ENCODE measurements at regions of chr10 and their contacts with region 1.

Region 1: GRCh38 chr10:99560277-99561126 is 27.8 kb downstream of the NKX2-3 start:
- DNase-seq: peak in 1 of 2 experiments; percentile 83
- H3K4me3 ChIP-seq: no peak overlapping the region
- H3K27ac ChIP-seq: no peak overlapping the region
- H3K4me1 ChIP-seq: peaks cover 0 to 2% (median 0%) of the 10 kb centered on the region in 4 experiments; a peak in 2 of 7 replicates
- H3K27me3 ChIP-seq: peaks cover 0 to under 1% (median 0%) of the 10 kb centered on the region in 4 experiments; a peak in 2 of 7 replicates
- CTCF ChIP-seq: peak in 2 of 3 experiments; percentile 78 to 80; a peak in 3 of 4 replicates
- EP300 ChIP-seq: no peak
- POLR2A ChIP-seq: no peak
- RAD21 ChIP-seq: peak; percentile 88 to 91

Region 2: GRCh38 chr10:99403674-99404073 is 156.8 kb before region 1 on chr10:
- CTCF ChIA-PET with region 1: no interaction called
- POLR2A ChIA-PET with region 1: no interaction called
- DNase-seq: no peak
- H3K4me3 ChIP-seq: no peak overlapping the region
- H3K27ac ChIP-seq: no peak overlapping the region
- H3K4me1 ChIP-seq: no peaks in the 10 kb centered on the region
- H3K27me3 ChIP-seq: no peaks in the 10 kb centered on the region
- CTCF ChIP-seq: no peak
- EP300 ChIP-seq: no peak
- POLR2A ChIP-seq: no peak
- RAD21 ChIP-seq: no peak

Region 3: GRCh38 chr10:99548041-99548530 is 12.4 kb before region 1 on chr10:
- CTCF ChIA-PET with region 1: interaction called, 24 read pairs
- POLR2A ChIA-PET with region 1: no interaction called
- DNase-seq: no peak
- H3K4me3 ChIP-seq: no peak overlapping the region
- H3K27ac ChIP-seq: no peak overlapping the region
- H3K4me1 ChIP-seq: no peaks in the 10 kb centered on the region; a peak in 1 of 7 replicates
- H3K27me3 ChIP-seq: peaks cover 4 to 33% (median 21%) of the 10 kb centered on the region in 4 experiments
- CTCF ChIP-seq: peak; percentile 62 to 82 (median 78)
- EP300 ChIP-seq: no peak
- POLR2A ChIP-seq: no peak
- RAD21 ChIP-seq: peak; percentile 67 to 77

Region 4: DNA sequence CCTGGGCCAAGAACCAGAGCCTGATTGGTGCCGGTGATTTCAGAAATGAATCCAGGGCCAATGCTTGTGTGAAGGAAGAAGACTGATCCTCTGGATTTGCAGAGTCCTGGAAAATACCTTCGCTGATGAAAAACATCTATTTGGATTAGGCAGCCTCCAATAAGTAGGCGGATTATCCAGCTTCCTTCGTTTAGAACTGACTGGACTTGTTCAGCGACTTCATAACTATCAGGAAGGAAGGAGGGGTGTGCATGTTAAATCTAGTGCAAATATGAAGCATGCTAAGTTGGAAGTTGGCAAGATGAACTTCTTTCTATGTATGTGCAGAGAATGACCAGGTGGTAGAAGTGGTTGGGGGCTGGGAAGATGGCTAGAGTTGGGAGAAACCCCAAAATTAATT is 13.3 kb after region 1 on chr10:
- CTCF ChIA-PET with region 1: interaction called, 11 read pairs
- POLR2A ChIA-PET with region 1: no interaction called
- DNase-seq: no peak
- H3K4me3 ChIP-seq: no peak overlapping the region
- H3K27ac ChIP-seq: no peak overlapping the region
- H3K4me1 ChIP-seq: peaks cover 2 to 7% (median 3%) of the 10 kb centered on the region in 4 experiments; a peak in 4 of 7 replicates
- H3K27me3 ChIP-seq: no peaks in the 10 kb centered on the region; a peak in 1 of 7 replicates
- CTCF ChIP-seq: no peak
- EP300 ChIP-seq: no peak
- POLR2A ChIP-seq: no peak
- RAD21 ChIP-seq: no peak

Region 5: GRCh38 chr10:99595770-99596465 is 35.4 kb after region 1 on chr10:
- CTCF ChIA-PET with region 1: interaction called, 26 read pairs
- POLR2A ChIA-PET with region 1: no interaction called
- DNase-seq: peak; percentile 13 to 47
- H3K4me3 ChIP-seq: no peak overlapping the region
- H3K27ac ChIP-seq: no peak overlapping the region
- H3K4me1 ChIP-seq: peaks cover 0 to 7% (median 4%) of the 10 kb centered on the region in 4 experiments; a peak in 4 of 7 replicates
- H3K27me3 ChIP-seq: peaks cover 0 to 4% (median 1%) of the 10 kb centered on the region in 4 experiments; a peak in 1 of 7 replicates
- CTCF ChIP-seq: no peak
- EP300 ChIP-seq: no peak
- POLR2A ChIP-seq: no peak
- RAD21 ChIP-seq: 0 out of 4 replicates have a peak, but pooled peaks of 1 of the 2 experiments have one; percentile 1

Region 6: GRCh38 chr10:99620713-99621453 is 60.4 kb after region 1 on chr10:
- CTCF ChIA-PET with region 1: interaction called, 323 read pairs
- POLR2A ChIA-PET with region 1: interaction called, 4 read pairs
- DNase-seq: peak in 1 of 2 experiments; percentile 88
- H3K4me3 ChIP-seq: peak overlapping the region; percentile 62 to 76 (median 70)
- H3K27ac ChIP-seq: peak overlapping the region; percentile 72
- H3K4me1 ChIP-seq: peaks cover 0 to 6% (median 3%) of the 10 kb centered on the region in 4 experiments; a peak in 6 of 7 replicates
- H3K27me3 ChIP-seq: no peaks in the 10 kb centered on the region
- CTCF ChIP-seq: no peak
- EP300 ChIP-seq: no peak
- POLR2A ChIP-seq: peak; percentile 64 to 81
- RAD21 ChIP-seq: no peak

Region 7: DNA sequence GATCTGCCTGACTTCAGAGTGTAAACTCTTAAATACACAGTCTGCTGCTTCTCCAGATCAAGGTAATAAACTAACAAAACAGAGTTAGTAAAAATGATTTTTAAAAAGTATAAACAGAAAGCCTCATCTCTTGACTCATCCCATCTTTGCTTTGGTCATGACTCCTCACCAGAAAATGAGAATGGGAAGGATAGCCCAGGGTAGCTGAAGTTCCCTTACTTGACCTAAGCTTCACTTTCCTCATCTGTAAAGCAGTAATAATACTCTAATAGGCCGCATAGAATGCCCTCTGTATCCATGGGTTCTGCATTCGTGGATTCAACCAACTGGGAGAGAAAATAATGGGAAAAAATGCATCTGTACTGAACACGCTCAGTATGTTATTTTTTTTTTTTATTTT is 71.0 kb after region 1 on chr10:
- CTCF ChIA-PET with region 1: no interaction called
- POLR2A ChIA-PET with region 1: no interaction called
- DNase-seq: no peak
- H3K4me3 ChIP-seq: no peak overlapping the region
- H3K27ac ChIP-seq: no peak overlapping the region
- H3K4me1 ChIP-seq: peaks cover 0 to 2% (median 0%) of the 10 kb centered on the region in 4 experiments; a peak in 1 of 7 replicates
- H3K27me3 ChIP-seq: no peaks in the 10 kb centered on the region
- CTCF ChIP-seq: no peak
- EP300 ChIP-seq: no peak
- POLR2A ChIP-seq: no peak
- RAD21 ChIP-seq: no peak

Region 8: GRCh38 chr10:99742701-99743100 is 182.2 kb after region 1 on chr10:
- CTCF ChIA-PET with region 1: no interaction called
- POLR2A ChIA-PET with region 1: no interaction called
- DNase-seq: no peak
- H3K4me3 ChIP-seq: no peak overlapping the region
- H3K27ac ChIP-seq: no peak overlapping the region
- H3K4me1 ChIP-seq: no peaks in the 10 kb centered on the region
- H3K27me3 ChIP-seq: no peaks in the 10 kb centered on the region
- CTCF ChIP-seq: no peak
- EP300 ChIP-seq: no peak
- POLR2A ChIP-seq: no peak
- RAD21 ChIP-seq: no peak